H1 (cell line): ENCODE measurements at regions of chr19 and their contacts with region 1.

Region 1: DNA sequence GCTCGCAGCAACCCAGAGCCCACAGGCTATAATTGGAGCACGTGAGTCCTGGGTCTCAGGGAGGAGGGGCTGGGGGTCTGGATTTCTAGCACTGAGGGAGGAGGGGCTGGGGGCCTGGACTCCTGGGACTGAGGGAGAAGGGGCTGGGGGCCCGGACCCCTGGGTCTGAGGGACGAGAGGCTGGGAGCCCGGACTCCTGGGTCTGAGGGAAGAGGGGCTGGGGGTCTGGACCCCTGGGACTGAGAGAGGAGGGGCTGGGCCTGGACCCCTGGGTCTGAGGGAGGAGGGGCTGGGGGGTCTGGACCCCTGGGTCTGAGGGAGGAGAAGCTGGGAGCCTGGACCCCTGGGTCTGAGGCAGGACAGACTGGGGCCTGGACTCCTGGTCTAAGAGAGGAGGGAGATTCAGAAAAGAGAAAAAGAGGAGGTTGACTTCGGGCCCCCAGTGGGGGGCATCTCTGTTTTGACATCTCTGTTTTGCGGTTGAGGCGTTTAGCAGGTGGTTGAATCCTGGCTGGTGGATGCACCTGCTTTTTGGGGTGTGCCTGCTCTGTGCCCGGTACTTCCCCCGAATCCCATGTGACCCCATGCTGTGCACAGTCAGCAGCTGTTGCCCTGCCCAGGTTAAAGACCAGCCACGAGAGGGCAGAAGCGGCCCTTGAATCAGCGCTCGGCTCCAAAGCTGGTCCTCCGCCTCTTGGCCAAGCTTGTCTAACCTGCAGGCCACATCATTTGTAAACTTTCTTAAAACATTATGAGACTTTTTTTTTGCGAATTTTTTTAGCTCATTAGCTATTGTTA is 10.5 kb downstream of the PVR start:
- DNase-seq: peak in 1 of 2 experiments; percentile 83
- H3K4me3 ChIP-seq: no peak overlapping the region
- H3K27ac ChIP-seq: no peak overlapping the region
- H3K4me1 ChIP-seq: peaks cover 0 to 2% (median 0%) of the 10 kb centered on the region in 4 experiments; a peak in 2 of 7 replicates
- H3K27me3 ChIP-seq: no peaks in the 10 kb centered on the region
- CTCF ChIP-seq: peak; percentile 71 to 82 (median 75)
- EP300 ChIP-seq: no peak
- POLR2A ChIP-seq: no peak
- RAD21 ChIP-seq: peak; percentile 69 to 77

Region 2: GRCh38 chr19:44570984-44571684 is 83.0 kb before region 1 on chr19:
- CTCF ChIA-PET with region 1: interaction called, 126 read pairs
- POLR2A ChIA-PET with region 1: interaction called, 3 read pairs
- DNase-seq: peak in 1 of 2 experiments; percentile 80
- H3K4me3 ChIP-seq: no peak overlapping the region
- H3K27ac ChIP-seq: no peak overlapping the region
- H3K4me1 ChIP-seq: no peaks in the 10 kb centered on the region
- H3K27me3 ChIP-seq: no peaks in the 10 kb centered on the region
- CTCF ChIP-seq: peak in 2 of 3 experiments; percentile 62 to 82; a peak in 3 of 4 replicates
- EP300 ChIP-seq: no peak
- POLR2A ChIP-seq: no peak
- RAD21 ChIP-seq: peak; percentile 80 to 89

Region 3: GRCh38 chr19:44582581-44583265 is 71.5 kb before region 1 on chr19:
- CTCF ChIA-PET with region 1: interaction called, 35 read pairs
- POLR2A ChIA-PET with region 1: interaction called, 4 read pairs
- DNase-seq: peak; percentile 50 to 91
- H3K4me3 ChIP-seq: no peak overlapping the region
- H3K27ac ChIP-seq: no peak overlapping the region
- H3K4me1 ChIP-seq: no peaks in the 10 kb centered on the region
- H3K27me3 ChIP-seq: no peaks in the 10 kb centered on the region
- CTCF ChIP-seq: peak; percentile 89 to 98 (median 97)
- EP300 ChIP-seq: no peak
- POLR2A ChIP-seq: no peak
- RAD21 ChIP-seq: peak; percentile 64 to 70

Region 4: GRCh38 chr19:44608391-44608821 is 45.8 kb before region 1 on chr19:
- CTCF ChIA-PET with region 1: interaction called, 27 read pairs
- POLR2A ChIA-PET with region 1: interaction called, 3 read pairs
- DNase-seq: no peak
- H3K4me3 ChIP-seq: no peak overlapping the region
- H3K27ac ChIP-seq: no peak overlapping the region
- H3K4me1 ChIP-seq: peaks cover 0 to 8% (median 4%) of the 10 kb centered on the region in 4 experiments; a peak in 5 of 7 replicates
- H3K27me3 ChIP-seq: no peaks in the 10 kb centered on the region
- CTCF ChIP-seq: no peak
- EP300 ChIP-seq: no peak
- POLR2A ChIP-seq: no peak
- RAD21 ChIP-seq: no peak

Region 5: GRCh38 chr19:44643605-44644401 is 10.4 kb before region 1 on chr19 and contains the start of gene PVR:
- CTCF ChIA-PET with region 1: interaction called, 13 read pairs
- POLR2A ChIA-PET with region 1: interaction called, 6 read pairs
- DNase-seq: peak; percentile 29 to 77
- H3K4me3 ChIP-seq: peak within 1 kb of the TSS; percentile 54 to 99 (median 74)
- H3K27ac ChIP-seq: no peak within 1 kb of the TSS; the same call in 1 of the 2 replicates
- H3K4me1 ChIP-seq: peaks cover 0 to 2% (median under 1%) of the 10 kb centered on the region in 4 experiments; a peak in 2 of 7 replicates
- H3K27me3 ChIP-seq: peaks cover 0 to 8% (median 6%) of the 10 kb centered on the region in 4 experiments; a peak in 6 of 7 replicates
- CTCF ChIP-seq: no peak
- EP300 ChIP-seq: no peak
- POLR2A ChIP-seq: peak in 1 of 2 experiments; percentile 20; a peak in 1 of 3 replicates
- RAD21 ChIP-seq: no peak
- total RNA-seq, gene PVR: 13.3 and 14.1 TPM in 2 replicates

Region 6: DNA sequence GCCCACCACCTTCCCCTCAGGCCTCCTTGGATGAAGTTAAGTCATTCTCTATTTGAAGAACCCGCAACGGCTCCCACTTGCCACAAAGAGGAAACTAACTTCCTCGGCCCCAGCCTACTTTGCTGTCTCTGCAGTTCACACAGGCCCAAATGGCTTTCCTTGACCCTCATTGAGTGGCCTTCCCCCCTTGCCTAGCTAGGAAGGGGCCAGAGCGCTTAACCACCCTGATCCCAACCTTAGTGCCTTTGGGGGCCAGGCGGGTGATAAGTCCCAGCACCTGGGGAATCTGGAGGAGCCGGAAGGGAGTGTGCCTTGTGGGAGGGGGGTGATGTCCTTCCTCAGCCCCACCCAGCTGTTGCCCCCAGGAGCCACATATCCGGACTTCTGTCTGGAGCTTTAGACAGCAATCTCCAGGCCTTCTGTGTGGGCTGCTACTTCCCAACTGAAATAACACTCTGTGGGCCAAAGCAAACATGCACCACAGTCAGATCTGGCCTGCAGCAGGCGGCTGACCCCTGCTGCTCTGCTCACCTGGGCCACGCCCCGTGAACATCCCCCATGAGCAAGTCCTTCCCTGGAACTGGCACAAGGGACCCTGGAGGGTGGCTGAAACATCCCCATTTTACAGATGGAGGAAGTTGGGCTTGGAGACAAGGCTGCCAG is 202.4 kb after region 1 on chr19:
- CTCF ChIA-PET with region 1: no interaction called
- POLR2A ChIA-PET with region 1: no interaction called
- DNase-seq: no peak
- H3K4me3 ChIP-seq: no peak overlapping the region
- H3K27ac ChIP-seq: no peak overlapping the region
- H3K4me1 ChIP-seq: peaks cover 0 to 2% (median 0%) of the 10 kb centered on the region in 4 experiments; a peak in 1 of 7 replicates
- H3K27me3 ChIP-seq: no peaks in the 10 kb centered on the region
- CTCF ChIP-seq: no peak
- EP300 ChIP-seq: no peak
- POLR2A ChIP-seq: 0 out of 3 replicates have a peak, but pooled peaks of 1 of the 2 experiments have one; percentile 23
- RAD21 ChIP-seq: no peak